GM13977 (cell line): ENCODE measurements at regions of chr12 and their contacts with region 1.

Region 1: DNA sequence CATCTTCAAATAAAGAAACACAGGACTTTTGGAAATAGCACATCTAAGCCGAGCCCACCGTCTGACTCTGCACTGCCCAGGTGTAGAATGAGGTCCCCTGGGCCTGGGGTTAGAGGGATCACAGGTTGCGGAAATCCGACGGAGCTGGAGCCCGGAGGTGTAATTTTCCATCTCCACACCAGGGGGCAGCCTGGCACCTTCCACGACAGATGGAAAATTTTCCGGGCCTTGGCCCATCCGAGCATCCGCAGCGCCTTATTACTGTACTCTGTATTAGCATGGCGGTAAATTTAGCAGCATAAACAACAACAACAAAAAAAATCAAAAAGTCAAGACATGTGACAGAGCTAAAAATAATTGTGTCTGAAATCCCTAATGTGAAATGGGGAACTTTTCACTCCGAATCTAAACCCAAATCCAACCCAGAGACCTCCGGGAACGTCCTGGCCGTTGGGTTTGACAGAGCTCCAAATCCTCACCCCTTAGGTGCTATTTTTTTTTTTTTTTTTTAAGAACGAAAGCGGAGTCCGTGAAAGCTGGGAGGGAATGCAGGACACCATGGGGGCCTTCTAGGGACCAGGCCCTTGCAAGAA is 93.9 kb downstream of the KSR2 start:
- DNase-seq: peak; percentile 68
- CTCF ChIP-seq: peak; percentile 82

Region 2: DNA sequence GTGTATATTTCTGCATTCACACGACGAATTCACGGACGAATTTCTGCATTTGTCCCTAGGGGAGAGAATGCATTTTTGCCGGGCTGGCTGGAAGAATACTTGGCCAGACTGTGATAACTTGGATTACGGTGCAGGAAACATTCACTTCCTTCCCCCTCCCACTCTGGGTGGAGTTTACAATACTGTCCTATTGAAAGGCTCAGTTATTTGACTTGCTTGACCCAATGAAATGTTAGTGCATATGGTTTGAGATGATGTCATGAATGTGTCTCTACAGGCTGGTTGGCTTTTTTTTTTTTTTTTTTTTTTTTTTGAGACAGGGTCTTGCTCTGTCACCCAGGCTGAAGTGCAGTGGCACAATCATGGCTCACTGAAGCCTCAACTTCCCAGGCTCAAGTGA is 422.8 kb before region 1 on chr12:
- in situ Hi-C with region 1: no loop called
- DNase-seq: no peak
- CTCF ChIP-seq: no peak

Region 3: GRCh38 chr12:118376089-118377020 is 501.4 kb after region 1 on chr12 and contains the start of gene SUDS3:
- in situ Hi-C with region 1: loop called (anchors 25 kb)
- DNase-seq: peak; percentile 91
- CTCF ChIP-seq: peak; percentile 99